HCT116 (cell line): ENCODE measurements at regions of chr21 and their contacts with region 1.

Region 1: DNA sequence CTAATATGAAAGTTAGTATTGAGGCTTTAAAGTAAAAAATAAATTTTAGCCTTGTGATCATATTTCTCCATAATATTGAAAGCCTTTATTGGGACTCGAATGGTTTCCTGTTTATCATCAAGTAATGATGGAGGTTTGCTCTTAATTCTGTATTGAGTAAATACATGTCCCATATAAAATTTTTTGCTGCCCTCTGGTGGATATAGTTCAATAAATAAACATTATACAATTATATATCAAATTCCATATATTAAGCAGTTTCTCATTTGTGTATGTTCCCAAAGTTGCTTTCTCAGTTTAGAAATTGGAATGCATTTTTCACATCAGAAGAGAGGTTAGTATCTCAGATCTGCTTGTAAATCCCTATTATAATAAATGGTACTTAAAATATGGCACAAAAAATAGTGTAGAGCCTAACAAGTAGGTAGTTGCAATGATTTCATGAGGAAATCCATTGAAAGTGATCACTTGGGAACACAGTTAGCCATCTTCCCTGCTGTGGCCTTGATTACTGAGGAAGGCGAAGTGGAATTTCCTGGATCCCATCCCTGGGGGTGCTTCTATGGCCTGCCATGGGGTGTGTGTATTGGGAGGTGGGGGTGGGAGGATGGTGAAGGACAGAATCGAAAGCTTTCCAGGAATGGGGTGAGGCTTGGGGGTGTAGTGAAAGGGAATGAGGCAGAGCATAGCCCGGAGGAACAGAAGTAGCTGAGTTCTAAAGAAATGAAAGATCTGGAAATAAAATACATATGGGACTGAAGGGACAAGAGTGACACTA is 84.1 kb upstream of the C21orf91 start:
- DNase-seq: no peak
- ATAC-seq: peak; percentile 52; the same call in 1 of the 2 replicates
- H3K4me3 ChIP-seq: no peak overlapping the region
- H3K27ac ChIP-seq: no peak overlapping the region
- H3K4me1 ChIP-seq: peaks cover 0 to 6% of the 10 kb centered on the region in 2 experiments; a peak in 2 of 4 replicates
- H3K27me3 ChIP-seq: peaks cover 2% of the 10 kb centered on the region; the same call in 1 of the 2 replicates
- CTCF ChIP-seq: peak in 1 of 3 experiments; percentile 18; a peak in 2 of 6 replicates
- POLR2A ChIP-seq: no peak
- RAD21 ChIP-seq: peak; percentile 30; the same call in 1 of the 2 replicates

Region 2: GRCh38 chr21:17679002-17679600 is 224.1 kb before region 1 on chr21:
- CTCF ChIA-PET with region 1: interaction called, 5 read pairs
- POLR2A ChIA-PET with region 1: no interaction called
- RAD21 ChIA-PET with region 1: no interaction called
- intact Hi-C with region 1: loop called (anchors 2 kb)
- DNase-seq: peak; percentile 37
- ATAC-seq: peak; percentile 74
- H3K4me3 ChIP-seq: no peak overlapping the region
- H3K27ac ChIP-seq: no peak overlapping the region
- H3K4me1 ChIP-seq: no peaks in the 10 kb centered on the region
- H3K27me3 ChIP-seq: no peaks in the 10 kb centered on the region
- CTCF ChIP-seq: peak; percentile 30 to 82 (median 68); a peak in 4 of 6 replicates
- POLR2A ChIP-seq: no peak
- RAD21 ChIP-seq: peak; percentile 63

Region 3: GRCh38 chr21:17869115-17869514 is 34.1 kb before region 1 on chr21:
- CTCF ChIA-PET with region 1: no interaction called
- POLR2A ChIA-PET with region 1: no interaction called
- RAD21 ChIA-PET with region 1: no interaction called
- intact Hi-C with region 1: loop called (anchors 1 kb)
- DNase-seq: no peak
- ATAC-seq: no peak
- H3K4me3 ChIP-seq: no peak overlapping the region
- H3K27ac ChIP-seq: no peak overlapping the region
- H3K4me1 ChIP-seq: no peaks in the 10 kb centered on the region
- H3K27me3 ChIP-seq: no peaks in the 10 kb centered on the region
- CTCF ChIP-seq: no peak
- POLR2A ChIP-seq: no peak
- RAD21 ChIP-seq: no peak

Region 4: GRCh38 chr21:19048098-19048672 is 1145.0 kb after region 1 on chr21:
- CTCF ChIA-PET with region 1: no interaction called
- POLR2A ChIA-PET with region 1: no interaction called
- RAD21 ChIA-PET with region 1: no interaction called
- intact Hi-C with region 1: no loop called
- DNase-seq: no peak
- ATAC-seq: no peak
- H3K4me3 ChIP-seq: no peak overlapping the region
- H3K27ac ChIP-seq: no peak overlapping the region
- H3K4me1 ChIP-seq: no peaks in the 10 kb centered on the region
- H3K27me3 ChIP-seq: no peaks in the 10 kb centered on the region
- CTCF ChIP-seq: no peak
- POLR2A ChIP-seq: no peak
- RAD21 ChIP-seq: no peak